ENCODE measurements at regions of chr19 and their contacts with region 1.

Region 1: DNA sequence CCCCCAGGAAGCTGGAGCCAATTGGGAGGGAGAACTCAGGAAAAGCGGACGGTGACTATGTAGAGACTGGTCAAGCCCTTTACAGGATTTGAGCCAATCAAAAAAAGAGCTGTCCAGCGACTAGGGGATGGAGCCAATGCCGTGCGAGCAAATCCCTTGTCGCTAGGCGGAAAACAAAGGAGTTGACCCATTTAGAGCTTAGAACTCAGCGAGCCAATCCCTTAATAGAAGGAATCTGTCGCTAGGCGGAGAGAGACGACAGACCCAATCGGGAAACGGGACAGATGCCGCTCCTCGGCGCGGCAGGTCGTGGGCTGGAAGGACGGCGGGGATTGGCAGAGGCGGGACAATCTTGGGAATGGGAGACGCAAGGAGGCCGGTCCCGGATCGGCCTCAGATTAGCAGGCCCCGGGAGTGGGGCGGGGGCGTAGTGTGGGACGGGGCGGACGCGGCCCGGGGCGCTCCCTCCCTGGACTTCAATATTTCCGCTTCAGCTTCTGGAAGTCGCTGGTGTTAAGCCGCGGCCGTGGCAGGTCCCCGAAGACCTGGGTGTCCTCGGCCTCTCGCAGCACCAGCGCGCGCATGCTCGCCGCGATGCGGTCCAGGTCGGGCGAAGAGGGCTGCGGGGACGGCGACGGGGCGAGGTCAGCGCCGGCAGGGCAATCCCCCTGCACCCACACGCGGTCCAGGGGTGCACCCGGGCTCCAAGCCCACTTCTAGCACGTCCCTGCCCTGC is 2.2 kb upstream of the PNKP start:
- DNase-seq: peak; percentile 98 to 100 (median 99)
- H3K4me3 ChIP-seq: peak overlapping the region; percentile 43 to 99 (median 56)
- H3K4me3 Mint-ChIP-seq: no peak overlapping the region
- H3K27ac ChIP-seq: peak overlapping the region; percentile 77 to 85
- H3K27ac Mint-ChIP-seq: peak overlapping the region in 2 of 7 donors; percentile 82 to 92
- H3K4me1 ChIP-seq: peaks cover 51 to 60% of the 10 kb centered on the region in 2 donors
- H3K4me1 Mint-ChIP-seq: peaks cover 50% of the 10 kb centered on the region
- H3K27me3 ChIP-seq: no peaks in the 10 kb centered on the region
- H3K27me3 Mint-ChIP-seq: peaks cover 0 to 3% (median 0%) of the 10 kb centered on the region in 3 donors
- CTCF ChIP-seq: no peak

Region 2: DNA sequence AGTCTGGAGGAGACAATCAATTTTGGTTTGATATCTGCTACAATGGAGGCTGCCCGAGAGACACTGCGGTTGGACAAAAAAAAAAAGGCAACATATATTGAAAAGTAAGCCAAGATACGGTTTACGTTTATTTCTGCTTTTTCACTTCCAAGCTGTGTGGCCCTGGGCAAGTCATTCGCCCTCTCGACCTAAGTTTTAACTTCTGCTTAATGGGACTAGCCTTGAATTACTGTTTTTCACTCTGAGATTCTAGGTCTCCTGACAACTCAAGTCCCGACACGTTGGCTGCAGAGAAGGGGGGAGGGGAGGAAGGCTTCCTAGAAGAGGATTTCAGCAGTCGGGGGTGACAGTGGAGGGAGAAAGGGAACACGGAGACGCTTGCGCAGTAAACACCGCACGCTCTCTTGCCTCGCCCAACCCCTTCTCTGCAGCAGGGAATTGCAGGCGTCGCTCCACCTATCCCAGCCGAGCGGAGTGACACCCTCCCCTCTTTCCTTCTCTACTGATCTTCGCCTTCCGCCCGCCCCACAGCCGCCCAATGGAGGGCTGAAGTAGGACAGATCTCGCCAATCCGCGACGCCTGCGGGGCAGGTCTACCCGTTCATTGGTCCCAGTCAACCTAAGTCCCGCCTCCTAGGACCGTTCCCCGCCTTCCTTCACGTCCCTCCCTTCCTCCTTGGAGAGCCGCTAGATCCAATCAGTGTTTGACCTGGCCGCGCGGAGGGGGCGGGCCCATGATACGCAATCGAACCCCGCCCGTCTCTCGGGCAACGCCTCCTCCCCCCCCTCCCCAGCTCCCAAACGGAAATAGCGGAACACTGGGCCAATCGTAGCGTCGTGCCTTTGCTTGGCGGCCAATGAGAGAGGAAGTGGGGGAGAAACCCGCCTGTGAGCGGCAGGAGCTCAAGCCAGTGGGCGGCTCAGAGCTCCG is 103.3 kb before region 1 on chr19:
- intact Hi-C with region 1: loop called in 1 of 2 experiments (anchors 5 kb)
- DNase-seq: peak; percentile 100
- H3K4me3 ChIP-seq: peak overlapping the region; percentile 33 to 74 (median 47)
- H3K4me3 Mint-ChIP-seq: peak overlapping the region; percentile 85 to 95
- H3K27ac ChIP-seq: peak overlapping the region; percentile 89 to 92
- H3K27ac Mint-ChIP-seq: peak overlapping the region; percentile 95 to 99 (median 98)
- H3K4me1 ChIP-seq: peaks cover 29 to 30% of the 10 kb centered on the region in 2 donors
- H3K4me1 Mint-ChIP-seq: peaks cover 42% of the 10 kb centered on the region
- H3K27me3 ChIP-seq: no peaks in the 10 kb centered on the region
- H3K27me3 Mint-ChIP-seq: peaks cover 1 to 2% (median 2%) of the 10 kb centered on the region in 3 donors
- CTCF ChIP-seq: no peak

Region 3: GRCh38 chr19:49817964-49818648 is 51.5 kb before region 1 on chr19 and contains the start of gene MED25:
- intact Hi-C with region 1: loop called (anchors 5 kb)
- DNase-seq: peak; percentile 81 to 89 (median 83)
- H3K4me3 ChIP-seq: peak within 1 kb of the TSS; percentile 70 to 100 (median 89)
- H3K4me3 Mint-ChIP-seq: peak within 1 kb of the TSS; percentile 96 to 100
- H3K27ac ChIP-seq: peak within 1 kb of the TSS; percentile 75 to 93
- H3K27ac Mint-ChIP-seq: peak within 1 kb of the TSS; percentile 97 to 100 (median 99)
- H3K4me1 ChIP-seq: peaks cover 23 to 27% of the 10 kb centered on the region in 2 donors
- H3K4me1 Mint-ChIP-seq: peaks cover 22% of the 10 kb centered on the region
- H3K27me3 ChIP-seq: no peaks in the 10 kb centered on the region
- H3K27me3 Mint-ChIP-seq: peaks cover 0 to 8% (median 0%) of the 10 kb centered on the region in 3 donors
- CTCF ChIP-seq: peak; percentile 23
- polyA plus RNA-seq, gene MED25: 13.9 to 52.9 (median 18.5) TPM

Region 4: DNA sequence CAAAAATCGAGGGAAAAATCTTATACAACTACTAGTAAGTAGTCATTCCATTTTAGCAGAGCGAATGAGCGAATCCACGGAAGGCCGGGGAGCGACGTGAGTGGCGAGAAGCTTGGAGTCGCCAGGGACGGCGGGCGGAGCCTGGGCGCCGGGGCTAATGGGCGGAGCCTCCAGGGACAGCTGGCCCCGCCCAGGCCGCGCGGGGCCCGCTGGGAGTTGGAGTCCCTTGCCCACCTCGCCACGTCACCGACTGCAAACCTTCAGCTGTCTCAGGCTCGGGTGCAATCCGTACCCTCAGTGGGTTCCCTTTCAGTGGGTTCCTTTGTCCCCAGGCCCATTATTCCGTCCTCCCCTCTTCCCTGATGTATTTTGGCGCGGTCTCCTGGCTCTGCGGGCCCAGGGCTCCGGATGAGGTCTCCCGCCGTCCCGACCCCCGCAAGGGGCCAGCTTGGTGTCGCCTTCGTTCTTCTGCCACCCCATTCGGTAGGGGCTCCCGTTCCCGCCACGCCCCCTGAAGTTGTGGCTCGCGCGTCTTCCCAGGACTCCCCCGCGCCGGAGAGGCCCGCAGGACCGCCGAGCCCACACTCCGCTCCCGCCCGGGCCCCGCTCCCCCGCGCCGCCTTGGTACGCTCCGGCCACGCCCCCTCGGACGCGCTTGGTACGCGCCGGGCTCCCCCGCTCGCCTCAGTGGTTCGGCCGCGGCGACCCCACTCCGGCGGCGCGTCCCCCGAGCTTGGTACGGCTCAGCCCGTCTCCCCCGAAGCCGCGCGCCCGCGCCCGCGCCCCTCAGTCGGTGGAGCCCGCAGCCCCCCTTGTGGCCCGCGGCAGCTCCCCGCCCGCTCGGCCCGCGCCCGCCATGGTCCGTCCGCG is 18.9 kb before region 1 on chr19 and contains the start of gene PTOV1:
- intact Hi-C with region 1: loop called in 1 of 2 experiments (anchors 2 kb)
- DNase-seq: peak; percentile 88 to 90 (median 88)
- H3K4me3 ChIP-seq: peak within 1 kb of the TSS; percentile 84 to 99 (median 96)
- H3K4me3 Mint-ChIP-seq: peak within 1 kb of the TSS; percentile 88 to 92
- H3K27ac ChIP-seq: peak within 1 kb of the TSS; percentile 95 to 97
- H3K27ac Mint-ChIP-seq: peak within 1 kb of the TSS; percentile 93 to 99 (median 96)
- H3K4me1 ChIP-seq: peaks cover 32 to 40% of the 10 kb centered on the region in 2 donors
- H3K4me1 Mint-ChIP-seq: peaks cover 42% of the 10 kb centered on the region
- H3K27me3 ChIP-seq: peaks cover 7 to 12% of the 10 kb centered on the region in 2 donors
- H3K27me3 Mint-ChIP-seq: peaks cover 14 to 17% (median 15%) of the 10 kb centered on the region in 3 donors
- CTCF ChIP-seq: no peak
- polyA plus RNA-seq, gene PTOV1: 18.3 to 67.9 (median 31.2) TPM

Measured in CD14-positive monocyte (primary cell).